ENCODE measurements at regions of chr5 and their contacts with region 1.

Region 1: GRCh38 chr5:69334793-69335268 is 2.2 kb upstream of the CCDC125 start:
- DNase-seq: peak; percentile 88
- H3K4me3 Mint-ChIP-seq: no peak overlapping the region
- H3K27ac Mint-ChIP-seq: no peak overlapping the region
- H3K4me1 Mint-ChIP-seq: peaks cover 17% of the 10 kb centered on the region
- H3K27me3 Mint-ChIP-seq: no peaks in the 10 kb centered on the region

Region 2: DNA sequence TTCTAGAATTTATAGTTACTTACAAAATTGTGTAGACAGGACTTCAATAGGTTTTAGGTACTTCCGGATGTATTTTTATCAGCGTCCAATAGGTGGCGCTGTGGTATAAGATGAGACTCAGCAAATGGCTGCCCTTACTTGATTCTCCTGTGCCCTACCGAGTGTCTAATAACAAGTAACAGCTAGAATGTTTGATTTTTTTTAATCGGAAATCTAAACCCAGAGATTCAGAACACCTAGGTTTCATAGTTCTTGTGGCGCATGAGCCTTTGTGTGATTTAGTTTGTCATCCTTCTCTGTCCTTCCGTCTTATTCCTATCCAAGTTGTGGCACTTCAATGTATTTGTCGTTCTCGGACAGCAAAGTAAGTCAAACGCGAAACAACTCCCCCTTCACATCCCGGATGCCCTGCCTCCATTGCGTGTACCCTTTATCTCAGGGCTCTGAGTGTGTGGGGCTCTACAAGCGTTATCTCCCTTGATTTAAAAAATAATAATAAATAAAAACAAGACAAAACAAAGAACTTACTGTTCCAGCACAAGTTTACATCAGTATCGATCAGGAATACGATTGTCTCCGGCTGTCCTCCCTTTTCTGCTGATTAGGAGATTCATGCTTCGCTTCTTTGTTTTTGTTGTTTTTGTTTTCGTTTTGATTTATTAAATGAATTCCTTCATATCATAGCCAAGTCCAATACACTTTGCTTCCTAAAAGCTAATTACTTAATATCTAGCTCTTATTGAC is 291.7 kb before region 1 on chr5:
- CTCF ChIA-PET with region 1: interaction called, 19 read pairs
- POLR2A ChIA-PET with region 1: no interaction called
- intact Hi-C with region 1: loop called (anchors 1 kb)
- DNase-seq: peak; percentile 82
- H3K4me3 Mint-ChIP-seq: peak overlapping the region; percentile 70
- H3K27ac Mint-ChIP-seq: peak overlapping the region; percentile 76
- H3K4me1 Mint-ChIP-seq: peaks cover 8% of the 10 kb centered on the region
- H3K27me3 Mint-ChIP-seq: no peaks in the 10 kb centered on the region

Region 3: DNA sequence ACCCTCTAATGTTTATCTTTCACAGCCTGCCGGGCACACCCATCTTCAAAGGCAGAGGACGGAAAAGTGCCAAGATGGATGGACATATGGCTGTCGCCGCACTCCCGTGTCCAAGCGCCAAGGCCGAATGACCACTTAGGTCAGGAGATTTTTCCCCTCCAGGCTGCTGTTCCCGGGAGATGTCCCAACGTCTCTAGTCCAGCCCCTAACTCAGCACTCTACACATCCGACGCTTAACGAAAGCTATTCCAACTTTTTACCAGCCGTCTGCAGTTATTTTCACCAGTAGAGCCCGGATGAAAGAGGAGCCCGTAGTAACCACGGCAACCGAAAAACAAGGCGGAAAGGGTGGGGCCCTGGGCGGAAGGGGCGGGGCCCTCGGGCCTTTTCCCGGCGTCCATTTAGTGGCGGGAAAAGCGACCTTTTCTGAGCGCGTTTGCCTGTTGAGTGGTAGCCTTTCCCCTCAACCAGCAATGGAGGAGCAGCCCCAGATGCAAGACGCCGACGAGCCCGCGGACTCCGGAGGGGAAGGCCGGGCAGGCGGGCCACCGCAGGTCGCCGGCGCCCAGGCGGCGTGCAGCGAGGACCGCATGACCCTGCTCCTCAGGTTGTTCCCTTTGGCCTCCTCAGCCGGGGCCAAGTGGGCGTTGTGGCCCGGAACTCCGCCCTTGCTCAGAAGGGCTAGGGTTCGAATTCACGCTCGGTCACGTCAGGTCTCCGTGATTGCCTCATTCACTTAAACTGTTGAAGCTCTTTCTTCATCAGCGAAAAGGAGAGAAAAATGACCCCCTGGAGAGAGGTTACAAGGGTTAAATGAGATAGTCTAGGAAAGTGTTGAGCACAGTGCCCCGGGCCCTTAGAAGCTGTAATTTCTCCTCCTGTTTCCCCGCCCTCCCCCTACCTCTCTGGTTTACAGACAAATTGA is 145.4 kb before region 1 on chr5 and contains the start of gene CENPH:
- CTCF ChIA-PET with region 1: interaction called, 6 read pairs
- POLR2A ChIA-PET with region 1: interaction called, 10 read pairs
- intact Hi-C with region 1: loop called (anchors 1 kb)
- DNase-seq: peak; percentile 96
- H3K4me3 Mint-ChIP-seq: peak within 1 kb of the TSS; percentile 90
- H3K27ac Mint-ChIP-seq: peak within 1 kb of the TSS; percentile 89
- H3K4me1 Mint-ChIP-seq: peaks cover 6% of the 10 kb centered on the region
- H3K27me3 Mint-ChIP-seq: no peaks in the 10 kb centered on the region
- total RNA-seq, gene CENPH: 80.7 to 82.0 TPM

Region 4: DNA sequence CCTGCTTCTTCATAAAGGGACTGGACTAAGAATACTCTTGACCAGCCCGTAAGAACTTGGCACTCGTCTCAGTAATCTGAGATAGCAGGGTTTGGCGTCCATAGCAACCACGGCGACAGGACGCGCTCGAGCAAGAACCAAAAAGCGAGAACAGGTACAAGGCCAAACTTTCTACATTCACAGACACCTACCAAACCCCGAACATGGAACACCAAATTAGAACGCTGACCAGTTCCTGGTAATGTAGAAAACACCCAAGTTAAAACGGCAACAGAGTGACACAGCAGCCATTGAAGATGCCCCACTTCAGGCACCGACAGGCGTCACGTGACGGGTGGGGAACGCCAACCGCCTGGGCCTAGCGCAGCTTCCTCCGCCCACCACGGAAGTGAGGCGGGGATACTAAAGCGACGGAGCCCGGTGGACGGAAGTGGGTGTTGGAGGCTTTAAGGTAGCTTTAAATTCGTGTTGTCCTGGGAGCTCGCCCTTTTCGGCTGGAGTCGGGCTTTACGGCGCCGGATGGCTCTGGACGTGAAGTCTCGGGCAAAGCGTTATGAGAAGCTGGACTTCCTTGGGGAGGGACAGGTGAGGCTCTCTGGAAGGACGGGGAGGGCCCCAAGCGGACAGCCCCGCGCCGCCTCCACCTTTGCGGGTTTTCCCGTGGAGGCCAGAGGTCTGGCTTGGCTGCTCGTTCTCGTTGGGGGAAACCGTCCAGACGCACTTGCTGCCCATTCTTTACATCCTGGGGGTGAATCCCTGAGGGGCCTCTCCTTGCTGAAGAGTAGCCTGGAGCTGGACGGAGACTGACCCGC is 100.2 kb before region 1 on chr5 and contains the start of gene CDK7:
- CTCF ChIA-PET with region 1: interaction called, 12 read pairs
- POLR2A ChIA-PET with region 1: interaction called, 4 read pairs
- intact Hi-C with region 1: no loop called
- DNase-seq: peak; percentile 96
- H3K4me3 Mint-ChIP-seq: peak within 1 kb of the TSS; percentile 98
- H3K27ac Mint-ChIP-seq: peak within 1 kb of the TSS; percentile 81
- H3K4me1 Mint-ChIP-seq: peaks cover 36% of the 10 kb centered on the region
- H3K27me3 Mint-ChIP-seq: no peaks in the 10 kb centered on the region
- total RNA-seq, gene CDK7: 36.2 to 41.2 TPM

Region 5: DNA sequence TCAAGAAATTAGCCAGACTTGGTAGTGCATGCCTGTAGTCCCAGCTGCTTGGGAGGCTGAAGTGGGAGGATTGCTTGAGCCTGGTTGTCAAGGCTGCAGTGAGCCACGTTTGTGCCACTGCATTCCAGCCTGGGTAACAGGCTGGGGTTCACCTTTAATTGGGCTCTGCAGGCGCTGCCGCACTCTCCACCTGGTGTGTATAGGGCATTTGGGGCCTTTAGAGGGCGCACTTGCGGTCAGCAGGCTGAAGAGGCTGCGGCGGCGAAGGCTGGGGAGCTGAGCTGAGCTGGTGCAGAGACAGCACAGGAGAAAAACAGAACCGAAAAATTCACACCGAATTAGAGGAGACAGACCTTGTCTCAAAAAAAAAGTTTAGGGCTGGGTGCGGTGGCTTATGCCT is 68.9 kb before region 1 on chr5:
- CTCF ChIA-PET with region 1: no interaction called
- POLR2A ChIA-PET with region 1: no interaction called
- intact Hi-C with region 1: no loop called
- DNase-seq: peak; percentile 13
- H3K4me3 Mint-ChIP-seq: no peak overlapping the region
- H3K27ac Mint-ChIP-seq: no peak overlapping the region
- H3K4me1 Mint-ChIP-seq: no peaks in the 10 kb centered on the region
- H3K27me3 Mint-ChIP-seq: no peaks in the 10 kb centered on the region

Measured in activated CD4-positive, alpha-beta memory T cell treated with anti-CD3 and anti-CD28 coated beads for 36 hours (primary cell).